Left ventricle myocardium superior (tissue), 1 donor: ENCODE measurements at regions of chr1 and their contacts with region 1.

Region 1: DNA sequence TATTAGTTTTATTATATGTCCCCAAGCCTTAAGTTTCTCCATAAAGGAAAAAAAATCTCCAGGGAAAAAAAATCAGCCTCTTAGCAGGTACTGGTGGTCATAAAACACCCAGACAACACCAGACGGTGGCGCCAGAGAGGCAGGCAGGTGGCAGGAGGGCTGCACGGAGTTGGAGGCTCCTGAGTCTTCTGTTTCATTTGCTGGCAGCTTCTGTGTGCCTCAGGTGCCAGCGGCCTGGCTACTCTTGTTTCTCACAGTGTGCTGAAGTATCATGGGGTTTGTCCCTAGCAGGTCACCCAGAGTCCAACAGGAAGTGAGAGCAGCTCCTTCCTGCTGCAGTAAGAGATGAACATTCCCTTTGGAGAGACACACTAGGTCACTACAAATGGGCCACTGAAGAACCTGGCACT is 123.3 kb upstream of the GADD45A start:
- DNase-seq: peak; percentile 96
- ATAC-seq: peak; percentile 93

Region 2: DNA sequence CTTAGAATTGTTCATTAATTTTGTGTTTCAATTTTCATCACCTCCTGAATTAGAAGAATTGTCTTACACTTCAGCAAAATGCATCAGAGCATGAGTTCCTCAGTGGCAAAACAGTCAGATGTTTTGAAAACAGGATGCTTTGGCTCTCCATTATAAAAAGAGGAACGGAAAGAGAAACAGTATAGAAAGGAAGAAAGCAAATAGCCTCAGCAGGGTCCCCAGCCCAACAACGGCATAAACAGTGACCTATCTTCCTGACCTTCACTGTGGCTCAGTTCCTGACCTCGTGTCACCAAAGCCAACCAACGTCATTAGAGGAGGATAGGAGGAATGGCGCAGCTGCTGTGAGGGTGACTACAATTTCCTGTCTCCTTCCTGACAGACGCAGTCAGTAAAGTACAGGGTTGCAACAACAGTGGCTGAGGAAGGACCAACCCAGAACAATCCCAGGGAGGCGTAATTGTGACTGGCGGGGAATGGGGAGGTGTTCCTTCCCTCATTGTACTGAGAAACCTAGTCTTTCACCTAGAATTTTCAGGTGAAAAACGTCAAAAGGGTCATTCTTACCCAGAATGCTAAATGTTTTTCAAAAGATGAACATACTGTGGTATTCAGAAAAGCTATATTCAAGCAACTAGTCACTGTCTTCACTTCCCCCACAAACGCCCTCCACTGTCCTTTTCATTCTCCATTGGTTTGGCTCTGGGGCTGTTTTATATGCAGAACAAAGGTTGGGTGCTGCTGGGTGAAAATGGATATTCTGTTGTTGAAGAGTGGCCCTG is 1225.7 kb before region 1 on chr1:
- intact Hi-C with region 1: no loop called
- DNase-seq: peak; percentile 69
- ATAC-seq: peak; percentile 79

Region 3: GRCh38 chr1:67347688-67348472 is 213.8 kb before region 1 on chr1:
- intact Hi-C with region 1: no loop called
- DNase-seq: peak; percentile 42
- ATAC-seq: peak; percentile 85

Region 4: GRCh38 chr1:67685067-67685557 is 123.4 kb after region 1 on chr1 and contains the start of gene GADD45A:
- intact Hi-C with region 1: loop called (anchors 10 kb)
- DNase-seq: peak; percentile 98
- ATAC-seq: peak; percentile 92
- total RNA-seq, gene GADD45A: 46.6 TPM

Region 5: GRCh38 chr1:67749844-67750689 is 188.4 kb after region 1 on chr1:
- intact Hi-C with region 1: loop called (anchors 10 kb)
- DNase-seq: no peak
- ATAC-seq: peak; percentile 16